Adrenal gland (tissue), 19 donors: ENCODE measurements at regions of chr16 and their contacts with region 1.

Region 1: GRCh38 chr16:31507929-31508705 is at the start of gene RUSF1:
- DNase-seq: peak; percentile 89 to 94 (median 92)
- H3K4me3 ChIP-seq: peak within 1 kb of the TSS; percentile 36 to 96 (median 91)
- H3K27ac ChIP-seq: peak within 1 kb of the TSS; percentile 62 to 92 (median 89)
- H3K4me1 ChIP-seq: peaks cover 7 to 28% of the 10 kb centered on the region in 2 donors
- H3K27me3 ChIP-seq: no peaks in the 10 kb centered on the region
- CTCF ChIP-seq: no peak
- POLR2A ChIP-seq: peak; percentile 68 to 81
- total RNA-seq, gene RUSF1: 41.2 to 86.6 (median 65.5) TPM

Region 2: DNA sequence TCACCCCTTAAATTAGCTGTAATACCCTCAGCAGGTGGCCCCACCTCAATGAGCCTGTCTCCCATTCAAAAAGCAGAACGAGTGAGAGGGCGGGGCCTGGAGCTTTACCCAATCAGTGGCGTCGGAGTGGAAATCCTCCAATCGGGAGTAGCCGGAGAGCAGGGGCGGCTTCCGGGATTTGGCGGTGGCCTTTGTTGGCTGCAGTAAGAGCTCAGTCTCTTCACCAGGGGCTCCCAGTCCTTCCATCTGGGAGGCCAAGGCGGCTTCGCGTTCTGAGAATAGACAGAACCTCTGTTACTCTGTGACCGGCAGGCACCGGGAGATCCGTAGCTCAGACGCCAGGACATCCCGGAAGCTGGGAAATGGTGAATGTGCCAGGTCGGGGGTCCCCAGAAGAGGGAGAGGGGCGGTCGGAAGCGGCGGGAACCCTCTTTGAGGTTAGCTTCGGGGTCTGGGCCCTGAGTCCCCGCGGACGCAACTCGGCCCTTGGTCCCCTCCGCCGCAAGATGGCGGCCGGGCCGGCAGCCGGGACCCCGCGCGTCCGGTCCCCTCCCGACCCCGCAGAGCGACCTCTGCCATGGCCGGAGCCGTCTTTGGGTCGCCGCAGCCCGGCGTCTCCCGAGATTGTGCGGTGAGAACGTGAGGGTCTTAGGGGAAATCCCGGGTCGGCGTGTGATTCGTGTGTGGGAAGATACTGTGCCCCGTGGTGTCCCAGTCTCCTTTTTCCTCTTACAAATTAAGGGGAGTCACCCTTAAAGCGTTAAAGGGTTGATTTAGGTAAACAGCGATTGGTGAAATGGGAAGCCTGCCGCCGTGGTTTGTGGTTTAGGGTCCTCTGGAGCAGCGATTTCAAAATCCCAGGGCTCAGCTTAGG is 205.2 kb after region 1 on chr16:
- intact Hi-C with region 1: loop called in 1 of 2 experiments (anchors 10 kb)
- DNase-seq: peak; percentile 89 to 98 (median 96)
- H3K4me3 ChIP-seq: peak overlapping the region; percentile 19 to 98 (median 73)
- H3K27ac ChIP-seq: peak overlapping the region; percentile 66 to 95 (median 90)
- H3K4me1 ChIP-seq: peaks cover 8 to 18% of the 10 kb centered on the region in 2 donors
- H3K27me3 ChIP-seq: no peaks in the 10 kb centered on the region
- CTCF ChIP-seq: no peak
- POLR2A ChIP-seq: peak; percentile 88 to 90